Psoas muscle (tissue), 8 donors: ENCODE measurements at regions of chr6 and their contacts with region 1.

Region 1: DNA sequence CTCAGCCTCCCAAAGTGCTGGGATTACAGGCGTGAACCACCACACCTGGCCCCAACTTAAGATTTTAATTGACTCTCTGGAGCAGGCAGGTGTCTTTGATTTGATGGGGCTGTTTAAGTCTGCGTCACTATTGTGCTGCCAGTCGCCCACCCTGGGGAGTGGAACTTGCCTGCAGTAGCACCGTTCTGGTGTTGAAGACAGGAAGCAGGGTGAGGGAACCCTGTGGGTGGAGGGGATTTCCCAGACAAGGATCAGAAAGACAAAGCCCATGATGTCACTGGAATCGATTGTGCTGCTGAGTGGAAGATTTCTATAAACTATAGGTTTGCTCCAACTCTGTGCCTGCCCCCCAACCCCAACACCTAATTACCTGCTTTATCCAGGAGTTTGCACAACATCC is 11.0 kb downstream of the ALDH8A1 start:
- DNase-seq: no peak
- ATAC-seq: no peak
- H3K4me3 ChIP-seq: no peak overlapping the region
- H3K27ac ChIP-seq: no peak overlapping the region
- H3K4me1 ChIP-seq: no peaks in the 10 kb centered on the region
- H3K27me3 ChIP-seq: no peaks in the 10 kb centered on the region
- CTCF ChIP-seq: no peak

Region 2: DNA sequence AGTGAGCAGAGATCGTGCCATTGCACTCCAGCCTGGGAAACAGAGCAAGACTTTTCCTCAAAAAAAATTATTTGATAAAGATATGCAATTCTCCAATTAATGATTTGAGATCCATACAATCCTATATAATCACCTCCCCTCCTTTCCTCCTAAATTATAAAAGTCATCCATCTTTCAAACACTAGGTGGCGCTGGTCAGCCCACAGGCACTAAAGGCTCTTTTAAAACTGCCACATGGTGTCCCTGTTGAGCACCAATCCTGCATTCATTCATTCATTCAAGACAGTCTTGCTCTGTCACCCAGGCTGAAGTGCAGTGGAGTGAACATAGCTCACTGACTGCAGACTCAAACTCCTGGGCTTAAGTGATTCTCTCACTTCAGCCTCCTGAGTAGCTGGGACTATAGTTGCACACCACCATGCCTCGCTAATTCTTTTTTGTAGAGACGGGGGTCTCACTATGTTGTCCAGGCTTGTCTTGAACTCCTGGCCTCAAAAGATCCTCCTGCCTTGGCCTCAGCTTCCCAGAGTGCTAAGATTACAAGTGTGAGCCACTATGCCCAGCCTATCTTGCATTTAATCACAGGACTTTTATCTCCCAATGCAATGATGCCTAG is 827.7 kb before region 1 on chr6:
- intact Hi-C with region 1: loop called in 1 of 2 experiments (anchors 5 kb)
- DNase-seq: no peak
- ATAC-seq: peak; percentile 29 to 73 (median 60)
- H3K4me3 ChIP-seq: no peak overlapping the region
- H3K27ac ChIP-seq: no peak overlapping the region
- H3K4me1 ChIP-seq: no peaks in the 10 kb centered on the region
- H3K27me3 ChIP-seq: no peaks in the 10 kb centered on the region
- CTCF ChIP-seq: peak; percentile 77

Region 3: DNA sequence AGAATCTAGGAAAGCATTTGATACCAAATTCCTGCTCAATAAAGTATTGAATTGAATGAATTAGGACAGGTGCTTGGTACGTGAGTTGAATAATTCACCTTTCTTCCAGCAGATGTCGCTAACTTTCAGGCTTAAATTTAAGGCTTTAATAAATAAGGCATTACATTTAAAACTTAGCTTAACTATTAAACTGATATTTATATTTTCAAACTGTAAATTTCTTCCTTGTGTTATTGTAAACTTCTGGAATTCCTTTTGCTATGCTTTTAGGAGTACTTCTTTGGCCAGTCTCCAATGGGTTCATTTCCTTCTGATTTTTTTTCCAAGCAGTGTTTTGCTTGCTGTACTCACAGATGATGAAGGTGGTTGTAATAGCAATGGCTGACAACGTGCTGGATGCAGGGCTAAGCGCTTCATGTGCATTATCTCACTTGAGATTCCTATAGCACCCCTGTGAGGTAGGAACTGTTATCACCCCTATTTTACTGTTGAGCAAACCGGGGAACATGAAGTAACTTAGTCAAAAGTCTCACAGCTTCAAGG is 815.2 kb before region 1 on chr6:
- intact Hi-C with region 1: loop called in 1 of 2 experiments (anchors 5 kb)
- DNase-seq: no peak
- ATAC-seq: peak in 2 of 4 donors; percentile 41 to 68
- H3K4me3 ChIP-seq: no peak overlapping the region
- H3K27ac ChIP-seq: no peak overlapping the region
- H3K4me1 ChIP-seq: no peaks in the 10 kb centered on the region
- H3K27me3 ChIP-seq: no peaks in the 10 kb centered on the region
- CTCF ChIP-seq: peak; percentile 79

Region 4: DNA sequence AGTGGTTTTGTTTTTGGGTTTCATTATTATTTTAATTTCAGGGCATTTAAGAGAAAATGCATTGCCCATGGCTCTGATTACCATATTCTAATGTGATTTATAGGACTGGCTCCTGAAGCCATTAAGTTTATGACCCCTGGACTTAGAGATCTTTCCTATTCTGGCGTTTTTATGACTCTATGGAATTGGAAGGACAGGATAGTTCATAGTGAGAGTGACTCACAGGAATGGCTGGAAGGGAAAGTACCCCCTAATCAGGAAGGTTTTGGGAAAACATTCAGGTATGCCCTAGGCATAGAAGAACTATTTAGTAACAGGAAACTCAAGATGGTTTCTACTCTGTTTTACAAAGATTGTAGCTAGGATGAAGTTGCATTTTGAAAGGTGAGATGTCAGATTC is 777.9 kb before region 1 on chr6:
- intact Hi-C with region 1: loop called (anchors 5 kb)
- DNase-seq: no peak
- ATAC-seq: no peak
- H3K4me3 ChIP-seq: no peak overlapping the region
- H3K27ac ChIP-seq: no peak overlapping the region
- H3K4me1 ChIP-seq: no peaks in the 10 kb centered on the region
- H3K27me3 ChIP-seq: no peaks in the 10 kb centered on the region
- CTCF ChIP-seq: no peak

Region 5: GRCh38 chr6:134882426-134883038 is 56.4 kb before region 1 on chr6:
- intact Hi-C with region 1: no loop called
- DNase-seq: peak; percentile 48 to 65
- ATAC-seq: peak; percentile 73 to 94 (median 91)
- H3K4me3 ChIP-seq: no peak overlapping the region
- H3K27ac ChIP-seq: no peak overlapping the region
- H3K4me1 ChIP-seq: peaks cover 4% of the 10 kb centered on the region
- H3K27me3 ChIP-seq: no peaks in the 10 kb centered on the region
- CTCF ChIP-seq: peak; percentile 98

Region 6: DNA sequence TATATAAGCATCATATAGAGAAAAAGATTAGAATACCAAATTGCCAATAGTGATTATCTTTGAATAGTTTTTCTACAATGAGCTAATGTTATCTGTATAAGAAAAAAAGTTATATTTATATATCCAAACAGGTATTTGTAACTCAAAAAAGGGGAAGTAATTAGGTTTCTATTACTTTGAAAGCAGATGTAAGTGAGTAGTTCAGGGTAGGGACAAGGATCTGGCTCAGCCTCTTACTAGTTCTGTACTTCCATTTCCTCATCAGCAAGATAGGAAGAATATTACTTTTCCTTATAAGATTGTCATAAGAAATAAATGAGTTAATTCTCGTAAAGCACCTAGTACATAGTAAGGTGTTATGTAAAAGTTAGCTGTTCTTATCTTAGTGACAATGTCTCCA is 526.4 kb after region 1 on chr6:
- intact Hi-C with region 1: no loop called
- DNase-seq: no peak
- ATAC-seq: no peak
- H3K4me3 ChIP-seq: no peak overlapping the region
- H3K27ac ChIP-seq: no peak overlapping the region
- H3K4me1 ChIP-seq: no peaks in the 10 kb centered on the region
- H3K27me3 ChIP-seq: no peaks in the 10 kb centered on the region
- CTCF ChIP-seq: no peak